ENCODE measurements at regions of chr10 and their contacts with region 1.

Region 1: DNA sequence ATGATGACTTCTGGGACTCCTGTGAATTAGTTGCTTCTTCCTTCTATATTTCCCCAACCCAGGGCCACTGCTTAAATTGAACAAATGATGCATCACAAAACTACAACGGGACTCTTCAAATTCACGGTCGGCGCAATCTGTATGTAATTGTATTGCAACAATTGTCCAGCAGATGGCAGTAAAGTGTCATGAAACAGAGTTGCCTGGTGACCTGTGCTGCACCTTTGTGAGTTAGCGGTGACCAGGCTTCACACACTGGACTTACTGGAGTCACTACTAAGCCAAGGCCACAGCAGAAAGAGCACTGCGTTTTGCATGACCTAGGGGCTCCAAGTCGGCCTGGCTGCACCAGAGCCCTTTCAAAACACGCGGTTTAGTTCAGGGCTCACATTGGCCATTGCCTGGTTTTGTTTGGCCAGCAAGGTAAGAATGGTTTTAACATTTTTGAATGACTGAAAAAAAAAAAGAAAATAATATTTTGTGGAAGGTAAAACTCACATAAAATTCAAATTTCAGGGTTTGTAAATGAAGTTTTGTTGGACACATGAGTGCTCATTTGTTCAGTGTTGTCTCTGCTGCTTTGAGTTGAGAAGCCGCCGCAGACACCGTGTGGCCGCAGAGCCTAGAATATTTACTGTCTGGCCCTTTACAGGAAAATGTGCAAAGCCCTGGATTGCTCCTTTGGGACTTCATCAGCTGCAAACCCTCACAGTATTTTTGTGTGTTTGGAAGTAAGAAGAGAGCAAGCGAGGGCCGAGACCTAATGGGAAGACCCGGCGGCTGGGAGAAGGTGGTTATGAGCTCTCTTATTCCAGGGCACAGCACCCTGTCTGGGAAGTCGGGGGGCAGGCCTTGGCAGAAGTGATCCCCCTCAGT is 23.2 kb upstream of the ZNF32 start:
- DNase-seq: peak; percentile 53
- ATAC-seq: peak; percentile 71
- H3K4me3 Mint-ChIP-seq: no peak overlapping the region
- H3K27ac Mint-ChIP-seq: no peak overlapping the region
- H3K4me1 Mint-ChIP-seq: peaks cover 3% of the 10 kb centered on the region
- H3K27me3 Mint-ChIP-seq: peaks cover 29% of the 10 kb centered on the region
- CTCF ChIP-seq: peak; percentile 84

Region 2: DNA sequence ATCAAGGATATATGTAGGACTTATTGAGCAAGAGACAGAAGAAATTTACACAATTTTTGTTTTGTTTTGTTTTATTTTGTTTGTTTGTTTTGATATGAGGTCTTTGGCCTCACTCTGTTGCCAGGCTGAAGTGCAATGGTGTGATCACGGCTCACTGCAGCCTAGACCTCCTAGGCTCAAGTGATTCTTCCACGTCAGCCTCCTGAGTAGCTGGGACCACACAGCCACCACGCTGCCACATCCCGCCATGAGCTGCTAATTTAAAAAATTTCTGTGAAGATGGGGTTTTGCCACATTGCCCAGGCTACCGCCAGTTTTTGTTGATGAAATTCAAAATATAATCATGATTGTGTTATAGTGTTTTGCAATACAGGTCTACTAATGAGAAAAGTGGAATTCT is 180.0 kb before region 1 on chr10:
- CTCF ChIA-PET with region 1: no interaction called
- POLR2A ChIA-PET with region 1: no interaction called
- intact Hi-C with region 1: no loop called
- DNase-seq: no peak
- ATAC-seq: no peak
- H3K4me3 Mint-ChIP-seq: no peak overlapping the region
- H3K27ac Mint-ChIP-seq: no peak overlapping the region
- H3K4me1 Mint-ChIP-seq: no peaks in the 10 kb centered on the region
- H3K27me3 Mint-ChIP-seq: no peaks in the 10 kb centered on the region
- CTCF ChIP-seq: no peak

Region 3: DNA sequence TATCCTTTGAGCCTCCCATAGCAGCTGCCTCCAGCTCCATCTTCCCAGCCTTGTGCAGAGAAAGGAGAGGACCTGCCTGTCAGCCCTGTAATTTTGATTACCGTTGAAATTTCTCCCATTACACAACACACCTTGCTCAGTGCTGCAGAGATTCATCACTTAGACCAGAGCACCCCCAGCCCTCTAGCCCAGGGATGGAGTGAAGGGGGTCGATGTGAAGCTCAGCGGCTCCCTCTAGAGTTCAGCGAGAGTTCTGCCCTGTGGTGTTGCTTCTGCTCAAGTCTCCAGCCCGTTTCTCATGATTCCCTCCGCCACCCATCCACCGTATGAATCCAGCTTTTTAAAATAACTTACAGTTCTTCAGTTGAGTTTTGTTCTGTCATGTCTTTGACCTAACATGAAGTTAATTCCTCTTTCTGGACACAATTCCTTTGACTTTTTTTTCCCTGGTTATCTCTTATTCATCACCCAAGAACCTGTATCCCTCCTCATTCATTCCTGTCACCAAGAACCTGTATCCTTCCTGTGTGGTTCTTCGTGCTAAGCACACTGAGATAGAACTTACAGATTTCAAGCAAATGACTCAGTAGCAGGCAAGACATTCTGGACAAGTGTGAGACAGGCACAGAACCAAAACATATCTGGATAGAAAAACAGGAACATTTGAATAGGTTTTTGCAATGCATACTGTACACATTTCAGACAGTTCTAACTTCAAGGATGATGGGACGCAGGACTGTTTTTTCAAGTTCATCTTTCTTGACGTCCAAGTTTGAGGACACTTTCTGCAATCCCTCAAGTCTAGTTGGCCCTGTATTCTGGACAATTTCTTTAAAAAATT is 11.8 kb after region 1 on chr10:
- CTCF ChIA-PET with region 1: interaction called, 26 read pairs
- POLR2A ChIA-PET with region 1: no interaction called
- intact Hi-C with region 1: no loop called
- DNase-seq: peak; percentile 53
- ATAC-seq: peak; percentile 88
- H3K4me3 Mint-ChIP-seq: no peak overlapping the region
- H3K27ac Mint-ChIP-seq: no peak overlapping the region
- H3K4me1 Mint-ChIP-seq: no peaks in the 10 kb centered on the region
- H3K27me3 Mint-ChIP-seq: peaks cover 30% of the 10 kb centered on the region
- CTCF ChIP-seq: peak; percentile 53

Region 4: DNA sequence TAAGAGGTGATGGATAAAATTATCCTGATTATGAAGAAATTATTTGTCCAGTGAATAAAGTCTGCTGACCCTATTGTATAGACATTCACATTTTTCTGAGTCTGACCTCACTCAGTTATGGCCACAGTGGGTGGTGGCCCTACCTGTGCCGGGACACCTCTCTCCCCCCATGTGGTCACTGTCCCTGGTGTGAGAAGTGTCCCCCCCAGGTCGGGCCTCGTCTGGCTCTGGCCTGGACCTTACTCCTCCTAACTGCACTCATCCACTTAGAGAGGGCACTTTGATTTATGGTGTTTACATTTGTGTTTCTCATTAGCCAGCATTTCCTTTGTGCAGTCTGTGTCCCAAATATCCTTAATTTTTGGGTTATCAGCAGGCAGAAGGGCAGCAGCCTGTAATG is 36.4 kb after region 1 on chr10:
- CTCF ChIA-PET with region 1: no interaction called
- POLR2A ChIA-PET with region 1: no interaction called
- intact Hi-C with region 1: no loop called
- DNase-seq: no peak
- ATAC-seq: no peak
- H3K4me3 Mint-ChIP-seq: no peak overlapping the region
- H3K27ac Mint-ChIP-seq: no peak overlapping the region
- H3K4me1 Mint-ChIP-seq: no peaks in the 10 kb centered on the region
- H3K27me3 Mint-ChIP-seq: no peaks in the 10 kb centered on the region
- CTCF ChIP-seq: no peak

Region 5: GRCh38 chr10:44386546-44387052 is 714.7 kb after region 1 on chr10:
- CTCF ChIA-PET with region 1: interaction called, 14 read pairs
- POLR2A ChIA-PET with region 1: no interaction called
- intact Hi-C with region 1: loop called (anchors 5 kb)
- DNase-seq: peak; percentile 41
- ATAC-seq: peak; percentile 53
- H3K4me3 Mint-ChIP-seq: no peak overlapping the region
- H3K27ac Mint-ChIP-seq: no peak overlapping the region
- H3K4me1 Mint-ChIP-seq: peaks cover 2% of the 10 kb centered on the region
- H3K27me3 Mint-ChIP-seq: peaks cover 31% of the 10 kb centered on the region
- CTCF ChIP-seq: peak; percentile 71

Region 6: DNA sequence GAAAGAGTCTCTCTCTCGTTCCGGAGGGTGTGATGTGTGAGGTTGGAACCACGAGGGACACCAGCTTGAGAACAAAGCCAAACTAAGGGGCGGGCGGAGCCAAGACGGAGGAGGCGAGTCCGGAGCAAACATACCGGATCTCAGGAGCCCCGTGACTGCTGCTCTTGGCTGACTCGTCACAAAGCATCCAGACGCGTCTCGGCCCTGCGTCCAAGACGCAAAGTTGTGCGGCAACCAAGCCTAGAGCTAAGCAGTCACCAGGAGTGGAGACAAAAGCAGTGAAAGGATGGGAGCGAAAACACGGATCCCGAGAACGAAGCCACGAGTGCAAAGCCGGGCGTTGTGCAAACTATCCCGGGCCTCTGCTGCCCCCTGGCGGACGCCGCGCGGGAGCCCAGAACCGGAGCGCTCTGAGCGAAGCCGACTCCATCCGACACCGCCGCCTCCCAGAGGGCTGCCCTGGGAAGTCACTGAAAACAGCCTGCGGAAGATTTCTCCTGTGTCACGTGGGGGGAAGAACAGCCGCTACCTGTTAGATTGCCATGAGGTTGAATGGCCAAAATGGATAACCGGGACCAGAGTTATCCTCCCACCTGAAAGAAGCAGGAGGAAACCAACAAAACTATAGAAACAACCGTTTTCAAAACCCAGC is 1192.9 kb after region 1 on chr10:
- CTCF ChIA-PET with region 1: interaction called, 3 read pairs
- POLR2A ChIA-PET with region 1: no interaction called
- intact Hi-C with region 1: loop called (anchors 5 kb)
- DNase-seq: peak; percentile 86
- ATAC-seq: peak; percentile 87
- H3K4me3 Mint-ChIP-seq: peak overlapping the region; percentile 80
- H3K27ac Mint-ChIP-seq: no peak overlapping the region
- H3K4me1 Mint-ChIP-seq: no peaks in the 10 kb centered on the region
- H3K27me3 Mint-ChIP-seq: peaks cover 40% of the 10 kb centered on the region
- CTCF ChIP-seq: peak; percentile 89

Measured in activated CD8-positive, alpha-beta T cell treated with anti-CD3 and anti-CD28 coated beads for 36 hours (primary cell).